ENCODE measurements at regions of chr3 and their contacts with region 1.

Region 1: GRCh38 chr3:125055913-125056745 is at the start of gene HEG1:
- DNase-seq: peak; percentile 94
- total RNA-seq, gene HEG1: 151 TPM

Region 2: GRCh38 chr3:124786441-124787241 is 269.5 kb before region 1 on chr3:
- intact Hi-C with region 1: loop called (anchors 10 kb)
- DNase-seq: no peak

Region 3: DNA sequence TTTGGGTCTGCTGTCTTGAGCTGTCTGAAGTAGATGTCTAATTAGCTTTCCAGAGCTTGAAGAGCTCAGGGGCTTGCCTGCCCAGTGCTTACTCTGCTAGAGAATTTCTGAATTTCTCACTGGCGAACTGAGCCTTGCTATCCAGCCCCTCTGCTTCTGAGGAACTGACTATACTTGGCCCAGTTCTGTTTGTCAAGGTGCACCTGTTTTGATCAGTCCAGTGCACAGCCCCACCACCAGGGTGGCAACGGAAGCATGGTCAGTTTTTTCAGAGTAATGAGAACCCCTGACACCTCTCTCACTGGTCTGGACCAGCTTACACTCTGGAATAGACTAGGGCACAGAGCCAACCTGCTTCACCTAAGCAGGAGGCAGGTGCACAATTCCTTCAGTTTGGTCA is 194.1 kb before region 1 on chr3:
- intact Hi-C with region 1: no loop called
- DNase-seq: no peak

Region 4: GRCh38 chr3:125011941-125012340 is 44.2 kb before region 1 on chr3:
- intact Hi-C with region 1: no loop called
- DNase-seq: no peak

Region 5: DNA sequence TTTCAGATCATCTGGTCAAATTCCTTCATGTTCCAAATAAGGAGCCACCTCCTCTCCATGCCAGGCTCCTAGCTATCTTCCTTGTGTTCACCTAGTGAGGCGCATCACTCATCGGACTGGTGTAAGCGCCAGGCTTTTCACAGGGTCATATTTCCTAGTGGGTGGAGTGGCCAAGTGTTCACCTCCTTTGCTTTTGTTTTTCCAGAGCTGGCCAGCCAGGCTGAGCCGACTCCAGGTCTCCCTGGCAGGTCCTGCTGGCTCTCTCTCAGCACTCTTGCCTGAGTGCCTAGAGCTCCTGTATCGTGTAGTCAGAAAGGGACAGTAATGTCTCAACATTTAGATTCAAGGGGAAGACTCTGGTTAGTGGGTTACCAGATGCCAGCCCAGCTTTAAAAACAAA is 31.3 kb before region 1 on chr3:
- intact Hi-C with region 1: loop called (anchors 2 kb)
- DNase-seq: peak; percentile 78

Region 6: GRCh38 chr3:125141596-125142419 is 85.7 kb after region 1 on chr3:
- intact Hi-C with region 1: loop called (anchors 2 kb)
- DNase-seq: peak; percentile 89

Region 7: DNA sequence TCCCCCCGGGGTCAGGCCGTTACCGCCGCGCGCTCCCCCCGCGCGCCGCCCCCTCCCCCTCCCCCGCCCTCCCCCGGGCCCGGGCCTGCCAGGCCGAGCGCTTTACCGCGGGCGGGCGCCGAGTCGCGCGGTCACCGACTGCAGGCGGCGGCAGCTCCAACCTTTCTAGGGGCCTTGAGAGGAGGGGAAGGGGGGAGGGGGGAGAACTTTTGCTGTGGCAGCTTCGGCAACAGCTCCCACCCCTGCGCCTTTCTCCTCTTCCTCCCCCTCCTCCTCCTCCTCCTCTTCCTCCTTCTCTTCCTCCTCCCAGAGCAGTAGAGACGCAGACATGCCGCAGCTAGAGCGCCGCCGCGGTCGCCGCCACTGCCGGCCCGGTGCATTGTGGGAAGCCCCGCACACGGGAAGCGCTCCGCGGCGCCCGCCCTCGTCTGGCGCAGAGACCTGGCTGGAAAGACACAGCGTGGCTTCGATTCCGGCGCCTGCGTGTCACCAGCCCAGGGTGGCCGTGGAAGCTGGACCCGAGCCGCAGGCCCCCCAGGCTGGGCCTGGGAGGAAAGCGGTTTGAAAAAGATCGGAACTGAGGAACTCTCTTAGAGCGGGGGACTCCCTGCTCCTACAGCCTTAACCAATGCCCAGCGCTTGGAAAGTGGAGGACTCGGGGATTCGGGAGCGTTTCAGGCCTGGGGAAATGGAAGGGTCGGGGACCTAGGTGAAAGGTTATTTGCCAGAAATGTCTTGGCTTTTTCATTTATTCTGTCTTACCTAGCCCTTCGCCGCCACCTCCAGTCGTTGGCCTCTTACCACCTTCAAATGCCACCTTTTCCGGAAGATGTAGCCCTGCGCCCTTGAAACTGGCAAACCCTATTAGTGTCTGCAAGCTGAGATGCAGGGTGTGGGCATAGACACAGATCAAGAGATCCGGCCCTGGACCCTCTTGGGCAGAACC is 319.1 kb after region 1 on chr3 and contains the start of gene ZNF148:
- intact Hi-C with region 1: loop called (anchors 10 kb)
- DNase-seq: peak; percentile 98
- total RNA-seq, gene ZNF148: 44.2 TPM

Measured in cardiac septum (tissue), 1 donor.